ENCODE measurements at regions of chr5 and their contacts with region 1.

Region 1: GRCh38 chr5:130183115-130183514 is 278.9 kb downstream of the CHSY3 start:
- DNase-seq: no peak
- H3K4me3 ChIP-seq: no peak overlapping the region
- H3K27ac ChIP-seq: no peak overlapping the region
- H3K4me1 ChIP-seq: no peaks in the 10 kb centered on the region
- H3K27me3 ChIP-seq: no peaks in the 10 kb centered on the region
- CTCF ChIP-seq: no peak
- POLR2A ChIP-seq: no peak

Region 2: DNA sequence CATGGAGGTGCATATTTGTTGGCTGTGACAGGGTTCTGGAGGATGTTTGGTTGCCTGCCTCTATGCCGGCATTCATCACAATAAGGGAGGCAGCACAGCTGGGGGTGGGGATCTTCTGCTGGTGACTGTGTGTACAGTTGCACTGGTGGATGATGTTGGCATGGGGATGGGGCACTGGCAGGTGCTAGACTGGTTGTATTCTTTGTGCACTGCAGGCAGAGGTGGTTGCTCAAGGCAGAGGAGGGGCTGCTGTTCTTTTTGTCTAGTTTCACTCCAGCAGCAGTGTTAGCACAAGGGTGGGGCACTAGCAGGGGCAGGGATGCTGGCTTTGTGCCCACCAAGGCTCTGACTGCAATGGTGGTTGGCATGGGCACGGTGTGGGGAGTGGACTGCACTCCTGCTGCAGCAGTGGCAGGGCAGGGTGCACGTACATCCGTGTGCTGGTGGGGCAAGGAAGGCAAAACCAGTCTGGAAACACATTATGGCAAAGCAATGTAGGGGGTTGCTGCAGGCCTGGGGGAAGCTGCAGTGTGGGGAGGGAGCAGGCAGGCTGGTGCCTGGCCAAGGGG is 1019.2 kb before region 1 on chr5:
- intact Hi-C with region 1: no loop called
- DNase-seq: no peak
- H3K4me3 ChIP-seq: no peak overlapping the region
- H3K27ac ChIP-seq: no peak overlapping the region
- H3K4me1 ChIP-seq: no peaks in the 10 kb centered on the region
- H3K27me3 ChIP-seq: no peaks in the 10 kb centered on the region
- CTCF ChIP-seq: no peak
- POLR2A ChIP-seq: no peak

Region 3: GRCh38 chr5:129966071-129966470 is 217.0 kb before region 1 on chr5:
- intact Hi-C with region 1: loop called (anchors 5 kb)
- DNase-seq: no peak
- H3K4me3 ChIP-seq: no peak overlapping the region
- H3K27ac ChIP-seq: no peak overlapping the region
- H3K4me1 ChIP-seq: no peaks in the 10 kb centered on the region
- H3K27me3 ChIP-seq: no peaks in the 10 kb centered on the region
- CTCF ChIP-seq: no peak
- POLR2A ChIP-seq: no peak

Region 4: GRCh38 chr5:130260481-130260880 is 77.4 kb after region 1 on chr5:
- intact Hi-C with region 1: no loop called
- DNase-seq: no peak
- H3K4me3 ChIP-seq: no peak overlapping the region
- H3K27ac ChIP-seq: no peak overlapping the region
- H3K4me1 ChIP-seq: no peaks in the 10 kb centered on the region
- H3K27me3 ChIP-seq: no peaks in the 10 kb centered on the region
- CTCF ChIP-seq: no peak
- POLR2A ChIP-seq: no peak